ENCODE measurements at regions of chr1 and their contacts with region 1.

Region 1: DNA sequence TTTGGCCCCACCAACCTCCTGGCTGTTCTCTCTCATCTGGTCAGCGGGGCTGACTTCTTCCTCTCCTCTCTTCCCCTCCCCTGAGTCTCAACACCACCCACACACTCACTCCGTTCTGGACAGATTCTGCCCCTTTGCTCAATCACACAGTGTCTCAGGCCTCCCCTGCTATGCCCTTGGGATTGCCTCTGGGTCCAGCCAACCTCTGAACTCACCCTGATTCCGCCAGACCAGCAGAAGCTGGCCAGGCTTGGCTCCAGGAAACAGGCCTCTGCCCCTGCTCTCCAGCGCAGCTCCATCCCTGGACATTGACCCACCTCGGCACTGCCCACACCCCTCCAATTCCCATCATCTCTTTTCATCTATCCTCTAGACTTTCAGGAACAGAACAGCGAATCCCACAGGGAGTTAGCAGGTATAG is 22.1 kb downstream of the AHDC1 start:
- DNase-seq: no peak
- ATAC-seq: no peak
- H3K4me3 ChIP-seq: no peak overlapping the region
- H3K4me3 Mint-ChIP-seq: no peak overlapping the region
- H3K27ac ChIP-seq: no peak overlapping the region
- H3K27ac Mint-ChIP-seq: no peak overlapping the region
- H3K4me1 ChIP-seq: peaks cover 5 to 10% of the 10 kb centered on the region in 2 donors
- H3K4me1 Mint-ChIP-seq: peaks cover 15% of the 10 kb centered on the region
- H3K27me3 ChIP-seq: no peaks in the 10 kb centered on the region
- H3K27me3 Mint-ChIP-seq: no peaks in the 10 kb centered on the region
- CTCF ChIP-seq: no peak

Region 2: GRCh38 chr1:27154991-27155781 is 426.6 kb before region 1 on chr1 and contains the start of gene SLC9A1:
- CTCF ChIA-PET with region 1: no interaction called
- POLR2A ChIA-PET with region 1: no interaction called
- intact Hi-C with region 1: no loop called
- DNase-seq: peak; percentile 97
- ATAC-seq: peak; percentile 95
- H3K4me3 ChIP-seq: peak within 1 kb of the TSS; percentile 62 to 87 (median 78)
- H3K4me3 Mint-ChIP-seq: peak within 1 kb of the TSS; percentile 89
- H3K27ac ChIP-seq: peak within 1 kb of the TSS; percentile 99
- H3K27ac Mint-ChIP-seq: peak within 1 kb of the TSS; percentile 98
- H3K4me1 ChIP-seq: peaks cover 25 to 45% of the 10 kb centered on the region in 2 donors
- H3K4me1 Mint-ChIP-seq: peaks cover 48% of the 10 kb centered on the region
- H3K27me3 ChIP-seq: no peaks in the 10 kb centered on the region
- H3K27me3 Mint-ChIP-seq: no peaks in the 10 kb centered on the region
- CTCF ChIP-seq: peak; percentile 81
- total RNA-seq, gene SLC9A1: 18.3 and 22.5 TPM in 2 replicates

Region 3: DNA sequence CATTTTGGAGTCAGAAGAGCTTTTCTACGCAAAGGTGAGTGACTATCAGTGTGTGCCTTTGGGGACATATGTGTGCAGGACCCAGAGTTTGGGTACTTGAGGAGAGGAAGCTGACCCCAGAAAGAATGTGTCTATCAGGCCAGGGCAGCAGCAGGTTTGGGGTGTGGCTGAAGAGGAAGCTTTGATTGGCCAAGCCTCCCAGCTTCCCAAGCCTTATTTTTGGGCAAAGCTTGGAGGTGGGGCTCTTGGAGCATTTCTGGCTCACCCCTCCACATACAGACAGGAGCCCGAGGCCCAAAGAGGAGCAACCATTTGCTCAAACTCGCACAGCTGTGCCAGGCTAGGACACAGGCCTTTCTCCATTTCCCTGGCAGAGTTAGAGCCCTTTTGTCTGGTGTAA is 184.7 kb before region 1 on chr1:
- CTCF ChIA-PET with region 1: no interaction called
- POLR2A ChIA-PET with region 1: no interaction called
- intact Hi-C with region 1: no loop called
- DNase-seq: no peak
- ATAC-seq: no peak
- H3K4me3 ChIP-seq: no peak overlapping the region
- H3K4me3 Mint-ChIP-seq: no peak overlapping the region
- H3K27ac ChIP-seq: no peak overlapping the region
- H3K27ac Mint-ChIP-seq: no peak overlapping the region
- H3K4me1 ChIP-seq: peaks cover 11 to 27% of the 10 kb centered on the region in 2 donors
- H3K4me1 Mint-ChIP-seq: peaks cover 28% of the 10 kb centered on the region
- H3K27me3 ChIP-seq: no peaks in the 10 kb centered on the region
- H3K27me3 Mint-ChIP-seq: no peaks in the 10 kb centered on the region
- CTCF ChIP-seq: no peak

Region 4: GRCh38 chr1:27503033-27503432 is 78.8 kb before region 1 on chr1:
- CTCF ChIA-PET with region 1: no interaction called
- POLR2A ChIA-PET with region 1: no interaction called
- intact Hi-C with region 1: no loop called
- DNase-seq: no peak
- ATAC-seq: no peak
- H3K4me3 ChIP-seq: no peak overlapping the region
- H3K4me3 Mint-ChIP-seq: no peak overlapping the region
- H3K27ac ChIP-seq: no peak overlapping the region
- H3K27ac Mint-ChIP-seq: no peak overlapping the region
- H3K4me1 ChIP-seq: no peaks in the 10 kb centered on the region
- H3K4me1 Mint-ChIP-seq: peaks cover 5% of the 10 kb centered on the region
- H3K27me3 ChIP-seq: no peaks in the 10 kb centered on the region
- H3K27me3 Mint-ChIP-seq: no peaks in the 10 kb centered on the region
- CTCF ChIP-seq: no peak

Region 5: DNA sequence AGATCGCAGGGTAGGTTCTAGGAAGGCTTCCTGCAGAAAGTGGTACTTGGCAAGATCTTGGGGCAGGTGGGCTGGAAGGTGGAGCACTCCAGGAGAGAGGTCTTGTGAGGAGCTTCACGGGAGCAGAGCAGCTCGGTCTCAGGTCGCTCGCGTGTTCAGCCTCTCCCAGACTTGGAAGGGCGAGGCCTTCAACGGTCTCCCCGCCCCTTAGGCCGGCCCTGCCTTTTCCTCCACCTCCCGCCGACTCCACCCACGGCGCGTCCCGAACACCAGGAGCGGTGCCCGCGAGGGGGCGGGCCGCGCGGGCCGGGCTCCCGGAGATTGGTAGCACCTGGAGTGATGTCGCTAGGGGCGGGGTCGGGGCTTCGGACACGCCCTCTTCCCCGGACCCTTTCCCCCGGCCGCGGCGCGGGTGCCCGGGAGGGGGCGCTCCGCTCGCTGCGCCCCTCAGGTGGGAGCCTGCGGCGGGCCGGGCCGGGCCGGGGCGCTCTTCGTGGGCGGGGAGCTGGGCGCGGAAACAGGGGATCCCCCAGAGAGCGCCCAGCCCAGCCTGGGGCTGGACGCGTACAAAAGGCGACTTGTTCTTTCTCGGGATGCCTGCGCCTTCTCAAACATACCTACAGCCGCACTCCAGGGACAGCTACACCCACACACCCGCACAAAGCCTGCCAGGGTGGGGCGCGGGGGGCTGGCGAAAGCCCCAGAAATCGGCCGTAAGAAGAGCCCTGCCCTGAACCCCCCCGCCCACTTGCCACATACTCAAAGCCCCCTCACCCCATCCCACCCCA is 13.3 kb before region 1 on chr1:
- CTCF ChIA-PET with region 1: interaction called, 21 read pairs
- POLR2A ChIA-PET with region 1: no interaction called
- intact Hi-C with region 1: no loop called
- DNase-seq: peak; percentile 95
- ATAC-seq: peak; percentile 92
- H3K4me3 ChIP-seq: peak overlapping the region in 4 of 5 experiments; percentile 25 to 69 (median 50)
- H3K4me3 Mint-ChIP-seq: peak overlapping the region; percentile 86
- H3K27ac ChIP-seq: peak overlapping the region; percentile 27 to 68
- H3K27ac Mint-ChIP-seq: peak overlapping the region; percentile 69
- H3K4me1 ChIP-seq: peaks cover 15 to 38% of the 10 kb centered on the region in 2 donors
- H3K4me1 Mint-ChIP-seq: peaks cover 40% of the 10 kb centered on the region
- H3K27me3 ChIP-seq: no peaks in the 10 kb centered on the region
- H3K27me3 Mint-ChIP-seq: no peaks in the 10 kb centered on the region
- CTCF ChIP-seq: peak; percentile 82